Calu3 (cell line): ENCODE measurements at regions of chr17 and their contacts with region 1.

Region 1: DNA sequence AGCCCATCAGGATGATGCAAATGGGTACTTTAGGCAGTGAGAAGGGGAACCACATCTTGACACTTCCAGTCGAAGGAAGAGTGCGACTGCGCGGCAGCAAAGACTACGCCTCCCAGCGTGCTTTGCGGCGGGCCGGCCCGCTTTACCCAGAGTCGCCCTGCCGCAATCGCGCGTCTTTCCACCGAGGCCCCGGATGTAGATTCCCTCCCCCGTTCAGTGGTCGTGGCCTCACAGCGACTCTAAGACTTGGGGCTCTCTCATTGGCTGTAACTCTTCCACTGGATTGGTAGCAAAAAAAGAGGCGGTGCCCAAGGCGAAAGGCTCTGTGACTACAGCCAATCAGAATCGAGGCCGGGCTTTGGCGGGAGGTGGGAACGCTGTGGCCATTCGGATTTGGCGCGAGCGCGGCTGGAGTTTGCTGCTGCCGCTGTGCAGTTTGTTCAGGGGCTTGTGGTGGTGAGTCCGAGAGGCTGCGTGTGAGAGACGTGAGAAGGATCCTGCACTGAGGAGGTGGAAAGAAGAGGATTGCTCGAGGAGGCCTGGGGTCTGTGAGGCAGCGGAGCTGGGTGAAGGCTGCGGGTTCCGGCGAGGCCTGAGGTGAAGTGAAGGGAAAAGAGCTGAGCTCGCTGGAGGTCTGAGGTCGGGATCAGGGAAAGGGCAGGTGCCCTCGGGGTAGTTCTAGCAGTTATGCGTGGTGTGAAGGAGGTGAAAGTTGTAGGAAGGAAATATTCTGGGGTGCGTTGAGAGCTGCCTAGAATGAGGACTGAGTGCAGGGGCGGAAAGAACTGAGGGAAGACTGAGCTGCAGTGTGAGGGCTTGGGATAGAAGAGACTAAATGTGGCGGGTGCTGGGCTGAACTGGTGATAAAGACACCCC is at the start of gene CDC6:
- DNase-seq: peak; percentile 100
- H3K4me3 Mint-ChIP-seq: peak within 1 kb of the TSS; percentile 83
- H3K27ac Mint-ChIP-seq: peak within 1 kb of the TSS; percentile 90
- H3K4me1 Mint-ChIP-seq: peaks cover 71% of the 10 kb centered on the region
- H3K27me3 Mint-ChIP-seq: no peaks in the 10 kb centered on the region
- CTCF ChIP-seq: no peak
- total RNA-seq, gene CDC6: 567 and 645 TPM in 2 replicates

Region 2: DNA sequence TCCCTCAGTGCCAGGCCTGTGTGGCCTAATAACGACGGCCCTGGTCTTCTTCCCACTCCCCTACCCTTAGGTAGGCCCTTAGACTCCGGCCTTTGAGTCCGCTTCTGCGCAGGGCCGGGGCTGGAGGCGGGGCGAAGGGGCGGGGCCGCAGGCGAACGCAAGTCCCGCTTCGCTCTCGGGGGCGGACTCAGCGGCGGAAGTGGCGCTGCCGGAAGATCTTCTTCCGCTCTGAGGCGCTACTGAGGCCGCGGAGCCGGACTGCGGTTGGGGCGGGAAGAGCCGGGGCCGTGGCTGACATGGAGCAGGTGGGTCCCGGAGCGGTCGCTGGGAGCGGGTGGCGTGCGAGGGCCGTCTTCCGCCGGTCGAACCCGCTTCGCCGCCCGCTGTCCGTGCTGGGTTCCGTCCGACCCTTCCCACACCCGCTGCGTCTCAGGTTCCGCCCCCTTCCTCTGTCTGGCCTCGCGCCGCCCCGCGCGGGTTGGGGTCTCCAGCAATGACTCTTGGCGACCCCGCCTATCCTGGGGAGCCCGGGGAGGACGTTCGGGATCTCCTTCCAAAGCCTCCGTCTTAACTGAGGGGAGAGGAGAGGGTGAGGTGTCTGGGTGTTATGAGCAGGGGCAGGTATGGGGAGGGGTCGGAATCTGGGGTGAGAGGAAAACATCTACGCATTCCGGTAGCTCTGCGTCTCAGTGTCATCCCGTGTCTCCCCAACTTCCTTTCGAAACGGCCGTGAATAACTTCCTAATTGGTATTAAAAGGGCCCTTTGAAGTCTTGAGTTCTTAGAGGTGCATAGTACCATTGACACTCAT is 650.6 kb before region 1 on chr17 and contains the start of gene STARD3:
- CTCF ChIA-PET with region 1: no interaction called
- intact Hi-C with region 1: loop called (anchors 10 kb)
- DNase-seq: no peak
- H3K4me3 Mint-ChIP-seq: peak within 1 kb of the TSS; percentile 71
- H3K27ac Mint-ChIP-seq: peak within 1 kb of the TSS; percentile 28
- H3K4me1 Mint-ChIP-seq: peaks cover 61% of the 10 kb centered on the region
- H3K27me3 Mint-ChIP-seq: peaks cover 5% of the 10 kb centered on the region
- CTCF ChIP-seq: no peak
- total RNA-seq, gene STARD3: 2,579 and 2,697 TPM in 2 replicates

Region 3: GRCh38 chr17:39828443-39828842 is 459.3 kb before region 1 on chr17:
- CTCF ChIA-PET with region 1: interaction called, 10 read pairs
- intact Hi-C with region 1: no loop called
- DNase-seq: peak; percentile 100
- H3K4me3 Mint-ChIP-seq: peak overlapping the region; percentile 36
- H3K27ac Mint-ChIP-seq: peak overlapping the region; percentile 48
- H3K4me1 Mint-ChIP-seq: peaks cover 17% of the 10 kb centered on the region
- H3K27me3 Mint-ChIP-seq: no peaks in the 10 kb centered on the region
- CTCF ChIP-seq: no peak

Region 4: DNA sequence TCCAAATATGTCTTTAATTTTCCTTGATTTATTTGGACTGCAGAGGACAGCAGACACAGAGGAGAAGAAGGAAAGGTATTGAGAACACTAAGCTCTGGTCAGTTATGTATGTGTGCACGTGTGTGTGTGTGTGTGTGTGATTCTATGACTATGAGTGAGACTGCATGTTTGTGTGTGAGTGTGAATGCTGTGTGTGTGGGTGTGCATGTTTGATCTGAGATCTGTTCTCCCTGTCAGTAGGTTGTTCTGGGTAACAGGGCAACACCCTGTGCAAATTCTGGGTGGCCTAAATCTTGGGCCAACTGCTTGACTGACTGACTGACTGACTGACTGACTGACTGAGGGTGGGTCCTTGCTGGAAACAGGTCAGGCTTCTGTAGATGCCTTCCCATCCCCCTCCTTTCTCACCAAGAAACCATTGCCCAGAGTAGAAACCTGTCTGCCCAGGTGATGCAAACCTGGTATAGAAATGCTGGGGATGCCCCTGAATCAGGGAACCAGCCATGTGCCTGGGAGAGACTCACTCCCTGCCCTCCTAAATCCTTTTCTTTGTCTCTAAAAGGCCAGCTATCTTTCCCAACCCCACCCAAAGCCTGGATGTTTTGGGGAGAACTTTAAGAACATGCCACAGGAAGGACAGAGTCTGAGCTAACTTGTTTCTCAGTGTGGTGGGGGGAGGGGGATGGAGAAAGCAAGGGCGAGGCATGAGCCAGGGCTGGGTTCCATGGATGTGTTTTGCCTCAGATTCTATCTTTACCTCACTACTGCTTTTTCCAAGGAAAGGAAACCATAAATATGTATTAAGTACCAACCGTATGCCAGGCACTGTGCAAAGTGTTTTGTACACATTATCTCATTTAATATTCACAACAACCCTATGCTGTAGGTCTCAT is 182.9 kb before region 1 on chr17:
- CTCF ChIA-PET with region 1: interaction called, 23 read pairs
- intact Hi-C with region 1: no loop called
- DNase-seq: peak; percentile 88
- H3K4me3 Mint-ChIP-seq: no peak overlapping the region
- H3K27ac Mint-ChIP-seq: peak overlapping the region; percentile 0
- H3K4me1 Mint-ChIP-seq: peaks cover 92% of the 10 kb centered on the region
- H3K27me3 Mint-ChIP-seq: no peaks in the 10 kb centered on the region
- CTCF ChIP-seq: no peak

Region 5: DNA sequence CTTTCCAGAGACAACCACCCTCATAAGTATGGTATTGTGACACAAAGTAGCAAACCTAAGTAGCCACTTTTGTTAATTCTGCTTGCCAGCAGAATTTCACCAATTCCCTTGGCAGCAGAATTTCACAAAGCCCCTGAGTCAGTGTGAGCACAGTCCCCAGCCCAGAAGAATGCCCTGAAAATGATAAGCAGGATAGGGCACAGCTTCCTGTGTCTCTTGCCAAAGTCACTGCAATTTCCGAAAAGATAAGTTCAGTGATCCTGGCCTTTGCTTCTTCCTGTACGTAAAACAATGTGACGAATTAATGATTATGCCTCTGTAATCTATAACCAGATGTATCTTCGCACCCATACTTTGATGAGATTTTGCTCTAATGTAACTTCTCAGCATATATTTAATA is 84.6 kb before region 1 on chr17:
- CTCF ChIA-PET with region 1: interaction called, 181 read pairs
- intact Hi-C with region 1: loop called (anchors 1 kb)
- DNase-seq: no peak
- H3K4me3 Mint-ChIP-seq: no peak overlapping the region
- H3K27ac Mint-ChIP-seq: no peak overlapping the region
- H3K4me1 Mint-ChIP-seq: peaks cover 7% of the 10 kb centered on the region
- H3K27me3 Mint-ChIP-seq: no peaks in the 10 kb centered on the region
- CTCF ChIP-seq: no peak

Region 6: DNA sequence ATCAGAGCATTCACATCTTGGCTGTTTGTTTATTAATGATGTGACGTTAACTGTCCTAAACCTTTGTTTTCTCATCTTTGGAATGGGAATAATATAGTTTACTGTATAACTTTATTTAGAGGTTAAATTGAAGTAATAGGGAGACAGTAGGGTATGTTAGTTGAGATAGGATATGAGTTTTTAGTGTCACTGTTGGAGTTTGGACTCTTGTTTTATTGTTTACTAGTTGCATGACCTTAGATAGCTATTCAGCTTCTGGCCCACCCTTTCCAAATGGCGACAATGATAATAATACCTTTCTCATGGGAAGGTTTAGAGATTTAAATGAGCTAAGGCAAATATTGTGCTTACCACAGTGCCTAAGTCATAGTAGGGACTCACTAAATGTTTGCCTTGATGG is 28.2 kb before region 1 on chr17:
- CTCF ChIA-PET with region 1: interaction called, 19 read pairs
- intact Hi-C with region 1: no loop called
- DNase-seq: no peak
- H3K4me3 Mint-ChIP-seq: no peak overlapping the region
- H3K27ac Mint-ChIP-seq: no peak overlapping the region
- H3K4me1 Mint-ChIP-seq: peaks cover 1% of the 10 kb centered on the region
- H3K27me3 Mint-ChIP-seq: no peaks in the 10 kb centered on the region
- CTCF ChIP-seq: no peak

Region 7: DNA sequence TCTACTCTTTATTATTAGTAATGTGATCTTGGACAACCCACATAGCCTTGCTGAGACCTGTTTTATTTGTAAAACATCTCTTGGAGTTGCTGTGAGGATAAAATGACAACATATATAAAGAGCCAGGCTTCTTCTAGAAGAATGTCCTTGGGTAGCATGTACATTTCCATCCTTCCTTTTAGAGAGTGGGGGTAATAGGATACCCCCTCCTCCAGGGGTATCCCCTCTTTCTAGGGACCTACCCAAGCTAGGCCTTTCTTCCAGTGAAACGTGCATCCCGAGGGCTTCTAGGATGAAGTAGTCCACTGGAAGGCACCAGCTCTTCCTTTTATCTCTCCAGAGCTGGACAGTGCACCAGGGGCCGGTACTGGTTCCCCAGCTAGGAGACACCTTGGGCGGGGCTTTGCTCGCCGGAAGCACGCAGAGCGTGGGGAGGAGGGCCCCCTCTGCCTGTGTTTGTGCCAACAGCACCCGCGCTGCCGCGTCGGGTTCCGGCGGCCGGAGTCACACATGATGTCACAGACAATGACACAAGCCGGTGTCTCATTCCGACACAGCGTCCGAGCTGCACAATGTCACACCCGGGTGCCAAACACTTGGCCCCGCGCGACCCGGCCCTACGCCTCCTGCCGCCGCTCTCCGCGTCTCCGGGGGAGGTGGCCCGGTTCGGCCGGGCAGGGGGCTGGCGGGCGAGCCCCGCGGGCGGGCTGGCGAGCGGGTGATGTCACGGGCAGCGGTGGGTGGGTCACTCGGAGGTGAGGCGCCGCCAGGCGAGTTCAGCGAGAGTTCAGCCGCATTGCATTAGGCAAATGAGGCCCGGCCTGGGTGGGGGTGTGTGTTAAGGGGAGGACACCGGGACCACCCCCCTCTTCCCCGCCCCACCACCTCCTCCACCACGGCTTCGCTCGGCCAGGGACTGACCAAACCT is 53.4 kb after region 1 on chr17:
- CTCF ChIA-PET with region 1: interaction called, 21 read pairs
- intact Hi-C with region 1: no loop called
- DNase-seq: peak; percentile 100
- H3K4me3 Mint-ChIP-seq: peak overlapping the region; percentile 89
- H3K27ac Mint-ChIP-seq: peak overlapping the region; percentile 75
- H3K4me1 Mint-ChIP-seq: peaks cover 57% of the 10 kb centered on the region
- H3K27me3 Mint-ChIP-seq: no peaks in the 10 kb centered on the region
- CTCF ChIP-seq: peak; percentile 92